CD8-positive, alpha-beta T cell (primary cell): ENCODE measurements at regions of chr12 and their contacts with region 1.

Region 1: GRCh38 chr12:10304161-10304574 is 3.5 kb upstream of the KLRD1 start:
- DNase-seq: peak in 4 of 9 experiments; percentile 10 to 83 (median 47)
- ATAC-seq: peak; percentile 52
- H3K4me3 ChIP-seq: no peak overlapping the region
- H3K4me3 Mint-ChIP-seq: no peak overlapping the region
- H3K27ac ChIP-seq: peak overlapping the region in 1 of 2 experiments; percentile 87
- H3K27ac Mint-ChIP-seq: peak overlapping the region; percentile 24
- H3K4me1 ChIP-seq: peaks cover 9% of the 10 kb centered on the region
- H3K4me1 Mint-ChIP-seq: peaks cover 42% of the 10 kb centered on the region
- H3K27me3 ChIP-seq: no peaks in the 10 kb centered on the region
- H3K27me3 Mint-ChIP-seq: no peaks in the 10 kb centered on the region
- CTCF ChIP-seq: no peak

Region 2: GRCh38 chr12:10075451-10075850 is 228.7 kb before region 1 on chr12:
- CTCF ChIA-PET with region 1: no interaction called
- POLR2A ChIA-PET with region 1: no interaction called
- intact Hi-C with region 1: no loop called
- DNase-seq: no peak
- ATAC-seq: no peak
- H3K4me3 ChIP-seq: no peak overlapping the region
- H3K4me3 Mint-ChIP-seq: no peak overlapping the region
- H3K27ac ChIP-seq: no peak overlapping the region
- H3K27ac Mint-ChIP-seq: no peak overlapping the region
- H3K4me1 ChIP-seq: no peaks in the 10 kb centered on the region
- H3K4me1 Mint-ChIP-seq: no peaks in the 10 kb centered on the region
- H3K27me3 ChIP-seq: no peaks in the 10 kb centered on the region
- H3K27me3 Mint-ChIP-seq: peaks cover 10% of the 10 kb centered on the region
- CTCF ChIP-seq: no peak

Region 3: GRCh38 chr12:10243818-10244520 is 60.2 kb before region 1 on chr12:
- CTCF ChIA-PET with region 1: no interaction called
- POLR2A ChIA-PET with region 1: interaction called, 3 read pairs
- intact Hi-C with region 1: loop called (anchors 5 kb)
- DNase-seq: peak in 4 of 9 experiments; percentile 11 to 76 (median 42)
- ATAC-seq: peak; percentile 34
- H3K4me3 ChIP-seq: peak overlapping the region in 1 of 2 experiments; percentile 27
- H3K4me3 Mint-ChIP-seq: peak overlapping the region; percentile 79
- H3K27ac ChIP-seq: peak overlapping the region in 1 of 2 experiments; percentile 76
- H3K27ac Mint-ChIP-seq: peak overlapping the region; percentile 83
- H3K4me1 ChIP-seq: peaks cover 28% of the 10 kb centered on the region
- H3K4me1 Mint-ChIP-seq: peaks cover 34% of the 10 kb centered on the region
- H3K27me3 ChIP-seq: no peaks in the 10 kb centered on the region
- H3K27me3 Mint-ChIP-seq: no peaks in the 10 kb centered on the region
- CTCF ChIP-seq: no peak